ENCODE measurements at regions of chr5 and their contacts with region 1.

Region 1: DNA sequence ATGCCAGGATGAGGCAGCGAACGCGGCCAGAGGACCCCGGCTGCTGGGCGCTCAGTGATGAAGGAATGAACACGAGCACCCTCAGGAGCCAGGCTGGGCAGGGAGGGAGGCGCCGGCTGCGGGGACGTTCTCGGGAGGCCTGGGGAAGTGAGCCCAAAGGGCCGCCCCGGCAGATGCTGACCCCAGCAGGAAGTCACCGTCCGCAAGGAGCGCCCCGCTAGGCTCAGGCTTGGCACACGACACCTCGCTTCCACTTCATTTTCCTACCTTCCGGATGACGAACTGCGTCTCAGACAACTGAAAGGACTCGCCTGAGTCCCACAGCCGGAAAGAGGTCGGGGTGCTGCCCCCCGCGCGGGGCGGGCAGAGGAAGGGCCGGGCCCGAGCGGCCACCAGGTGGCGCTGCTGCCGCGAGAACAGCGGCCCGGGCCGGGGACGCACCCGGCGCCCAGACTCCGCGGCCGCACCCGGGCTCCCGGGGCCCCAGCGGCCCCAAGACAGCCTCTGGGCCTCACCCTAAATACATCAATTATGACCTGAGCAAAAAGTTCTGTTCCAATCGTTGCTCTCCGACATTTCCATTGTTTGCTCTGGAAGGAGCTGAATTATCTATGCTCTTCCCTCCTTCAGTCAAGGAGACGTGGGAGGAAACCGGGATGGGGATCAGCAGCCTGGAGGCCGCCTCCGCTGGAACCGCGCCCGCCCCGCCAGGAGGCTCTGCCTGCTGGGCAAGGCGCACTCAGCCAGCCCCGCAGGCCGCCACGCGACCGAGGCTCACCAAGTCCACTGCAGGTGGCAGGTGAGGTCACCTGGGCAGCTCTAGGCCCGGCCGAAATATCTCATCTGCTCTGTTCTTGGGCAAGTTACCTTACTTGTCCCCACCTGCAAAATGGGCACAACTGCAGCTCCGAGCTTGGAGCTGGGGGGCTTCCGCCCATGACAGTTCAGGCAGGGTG is 107.0 kb downstream of the ZNF354C start:
- DNase-seq: peak; percentile 70
- H3K4me3 ChIP-seq: peak overlapping the region in 3 of 4 donors; percentile 20 to 39 (median 36)
- H3K27ac ChIP-seq: no peak overlapping the region
- H3K4me1 ChIP-seq: peaks cover 0 to 15% (median 11%) of the 10 kb centered on the region in 4 donors
- H3K27me3 ChIP-seq: no peaks in the 10 kb centered on the region
- CTCF ChIP-seq: peak; percentile 46 to 99 (median 64)
- EP300 ChIP-seq: no peak
- POLR2A ChIP-seq: no peak

Region 2: GRCh38 chr5:179495906-179496455 is 328.8 kb after region 1 on chr5:
- intact Hi-C with region 1: loop called (anchors 1 kb)
- DNase-seq: no peak
- H3K4me3 ChIP-seq: no peak overlapping the region
- H3K27ac ChIP-seq: no peak overlapping the region
- H3K4me1 ChIP-seq: no peaks in the 10 kb centered on the region
- H3K27me3 ChIP-seq: peaks cover 0 to 14% (median 0%) of the 10 kb centered on the region in 3 donors
- CTCF ChIP-seq: no peak
- EP300 ChIP-seq: no peak
- POLR2A ChIP-seq: no peak

Measured in sigmoid colon (tissue), 7 donors.